Heart right ventricle (tissue), 16 donors: ENCODE measurements at regions of chr11 and their contacts with region 1.

Region 1: DNA sequence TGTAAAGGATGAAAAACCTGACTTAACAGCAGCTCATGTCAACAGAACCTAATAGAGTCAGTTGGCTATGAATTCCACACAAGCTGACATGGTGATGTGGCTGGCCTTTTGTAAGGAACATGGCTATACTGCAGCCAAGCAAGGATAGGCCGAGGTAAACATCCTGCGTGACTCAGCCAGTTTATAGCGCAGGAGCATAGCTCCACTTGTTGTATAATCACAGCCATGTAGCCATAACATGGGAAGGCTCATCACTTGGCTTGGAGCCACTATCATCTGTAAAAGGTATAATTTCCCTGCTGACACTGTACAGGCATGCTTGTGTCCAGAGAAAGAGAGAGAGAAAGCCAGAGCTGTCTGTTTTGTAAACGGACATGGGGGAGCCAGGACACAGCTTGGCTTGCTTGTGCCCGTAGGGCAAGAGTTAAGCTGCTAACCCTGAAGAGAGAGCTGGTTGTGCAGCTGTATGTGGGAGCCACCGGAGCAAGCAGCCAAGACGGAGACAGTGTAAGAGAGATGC is 104.4 kb upstream of the PLET1 start:
- DNase-seq: no peak
- ATAC-seq: no peak
- H3K4me3 ChIP-seq: no peak overlapping the region
- H3K27ac ChIP-seq: no peak overlapping the region
- H3K4me1 ChIP-seq: no peaks in the 10 kb centered on the region
- H3K27me3 ChIP-seq: no peaks in the 10 kb centered on the region
- CTCF ChIP-seq: no peak

Region 2: DNA sequence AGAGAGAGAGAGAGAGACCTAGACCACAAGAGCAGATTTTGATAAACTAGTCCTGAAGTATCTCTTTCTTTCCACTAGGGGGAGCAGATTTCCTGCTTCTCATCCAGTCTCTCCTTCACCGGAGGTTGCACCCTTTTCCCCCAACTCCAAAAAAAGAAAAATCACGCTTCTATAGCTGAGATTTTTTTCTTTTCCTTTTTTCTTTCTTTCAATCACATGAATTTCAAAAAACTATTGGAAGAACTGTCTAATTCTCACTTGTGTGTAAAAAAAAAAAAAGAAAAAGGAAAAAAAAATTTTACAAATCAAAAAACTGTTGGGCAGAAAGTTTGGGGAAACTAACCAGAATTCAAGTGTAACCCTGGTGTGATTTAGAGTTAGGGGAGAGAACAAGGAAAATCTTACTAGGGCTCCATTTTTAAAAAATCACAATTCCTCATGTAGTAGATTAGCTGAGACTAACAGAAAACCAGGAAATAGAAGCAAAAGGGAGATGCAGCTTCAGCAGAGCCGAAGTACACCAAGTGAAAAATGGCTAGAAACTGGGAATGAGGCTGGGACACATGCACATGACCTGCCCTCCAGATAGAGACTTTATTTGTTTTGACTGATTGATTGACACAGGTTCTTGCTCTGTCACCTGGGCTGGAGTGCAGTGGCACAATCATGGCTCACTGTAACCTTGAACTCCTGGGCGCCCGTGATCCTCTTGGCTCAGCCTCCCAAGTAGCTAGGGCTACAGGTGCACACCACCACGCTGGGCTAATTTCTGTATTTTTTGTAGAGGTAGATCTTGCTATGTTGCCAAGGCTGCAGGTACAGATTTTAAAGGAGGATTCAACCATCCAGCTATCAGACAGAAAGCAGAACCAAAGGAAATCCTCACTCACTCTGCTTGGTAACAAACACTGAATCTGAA is 251.2 kb before region 1 on chr11:
- intact Hi-C with region 1: no loop called
- DNase-seq: no peak
- ATAC-seq: peak in 6 of 8 donors; percentile 42 to 74 (median 72)
- H3K4me3 ChIP-seq: peak overlapping the region in 1 of 10 donors; percentile 10
- H3K27ac ChIP-seq: peak overlapping the region in 1 of 10 donors; percentile 11
- H3K4me1 ChIP-seq: peaks cover 0 to 6% (median 0%) of the 10 kb centered on the region in 9 donors
- H3K27me3 ChIP-seq: no peaks in the 10 kb centered on the region
- CTCF ChIP-seq: peak; percentile 40 to 79 (median 65)

Region 3: DNA sequence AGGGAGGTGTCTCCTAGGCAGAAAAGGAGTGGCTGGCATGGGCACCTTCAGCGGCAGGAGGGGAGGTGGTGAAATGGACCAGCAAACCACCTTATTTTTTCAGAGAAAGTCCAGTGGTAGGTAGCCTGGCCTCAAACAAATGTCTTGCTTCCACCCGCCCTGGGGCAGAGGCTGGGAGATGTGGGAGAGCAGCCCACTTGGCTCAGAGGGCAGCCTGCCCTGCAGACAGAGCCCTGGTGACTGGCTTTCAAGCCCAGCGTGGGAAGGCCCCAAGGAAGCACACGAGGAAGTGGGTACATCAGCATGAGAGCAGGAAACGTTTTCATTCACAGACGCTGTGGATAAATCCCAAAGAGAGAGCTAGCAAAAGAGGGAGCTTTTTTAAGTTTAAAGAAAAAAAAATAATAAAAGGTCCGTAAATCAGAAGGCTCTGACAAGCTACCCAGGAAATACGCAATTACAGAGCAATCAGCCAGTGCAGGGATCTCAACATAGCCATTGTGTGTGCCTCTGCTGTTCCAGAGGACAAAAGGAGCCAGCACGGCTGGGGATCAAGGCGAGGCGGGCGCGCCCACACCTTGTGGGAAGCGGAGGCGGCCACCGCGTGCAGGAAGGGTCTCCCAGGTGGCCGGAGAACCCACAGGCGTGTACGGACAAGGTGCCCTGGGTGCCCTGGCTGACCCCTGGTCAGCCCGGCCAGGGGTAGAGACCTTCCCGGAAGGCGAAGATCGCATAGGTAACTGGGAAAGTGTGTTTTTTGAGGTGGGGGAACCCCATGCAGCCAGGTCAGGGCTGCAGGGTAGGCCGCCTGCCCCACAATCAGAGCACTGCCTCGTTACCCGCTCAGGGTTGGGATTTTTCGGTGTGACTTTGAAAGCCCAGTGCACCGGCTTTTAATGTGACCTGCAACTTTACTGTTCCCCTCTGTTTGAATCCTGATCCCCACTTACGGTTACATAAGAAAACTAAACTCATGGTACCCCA is 134.5 kb after region 1 on chr11:
- intact Hi-C with region 1: loop called in 1 of 10 experiments (anchors 10 kb)
- DNase-seq: no peak
- ATAC-seq: no peak
- H3K4me3 ChIP-seq: no peak overlapping the region
- H3K27ac ChIP-seq: no peak overlapping the region
- H3K4me1 ChIP-seq: no peaks in the 10 kb centered on the region
- H3K27me3 ChIP-seq: peaks cover 0 to 4% (median 0%) of the 10 kb centered on the region in 7 donors
- CTCF ChIP-seq: no peak

Region 4: DNA sequence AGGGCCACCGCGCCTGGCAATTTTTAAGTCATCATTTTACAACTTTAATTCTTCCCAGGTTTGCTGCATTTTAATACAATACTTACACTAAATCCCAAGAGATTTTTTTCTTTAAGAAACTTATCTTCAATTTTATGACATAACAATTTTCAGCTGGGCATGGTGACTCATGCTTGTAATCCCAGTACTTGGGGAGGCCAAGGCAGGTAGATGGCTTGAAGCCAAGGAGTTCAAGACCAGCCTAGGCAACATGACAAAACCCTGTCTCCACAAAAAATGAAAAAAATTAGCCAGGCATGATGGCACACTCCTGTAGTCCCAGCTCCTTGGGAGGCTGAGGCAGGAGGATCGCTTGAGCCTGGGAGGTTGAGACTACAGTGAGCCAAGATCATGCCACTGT is 1453.4 kb after region 1 on chr11:
- intact Hi-C with region 1: loop called in 1 of 10 experiments (anchors 5 kb)
- DNase-seq: no peak
- ATAC-seq: no peak
- H3K4me3 ChIP-seq: no peak overlapping the region
- H3K27ac ChIP-seq: no peak overlapping the region
- H3K4me1 ChIP-seq: peaks cover 0 to 10% (median 0%) of the 10 kb centered on the region in 9 donors
- H3K27me3 ChIP-seq: no peaks in the 10 kb centered on the region
- CTCF ChIP-seq: no peak